Activated CD8-positive, alpha-beta T cell treated with anti-CD3 and anti-CD28 coated beads for 36 hours (primary cell): ENCODE measurements at regions of chrX and their contacts with region 1.

Region 1: GRCh38 chrX:131854581-131854980 is 168.5 kb upstream of the STK26 start:
- DNase-seq: no peak
- ATAC-seq: no peak
- H3K4me3 Mint-ChIP-seq: no peak overlapping the region
- H3K27ac Mint-ChIP-seq: no peak overlapping the region
- H3K4me1 Mint-ChIP-seq: no peaks in the 10 kb centered on the region
- H3K27me3 Mint-ChIP-seq: no peaks in the 10 kb centered on the region
- CTCF ChIP-seq: peak; percentile 22

Region 2: DNA sequence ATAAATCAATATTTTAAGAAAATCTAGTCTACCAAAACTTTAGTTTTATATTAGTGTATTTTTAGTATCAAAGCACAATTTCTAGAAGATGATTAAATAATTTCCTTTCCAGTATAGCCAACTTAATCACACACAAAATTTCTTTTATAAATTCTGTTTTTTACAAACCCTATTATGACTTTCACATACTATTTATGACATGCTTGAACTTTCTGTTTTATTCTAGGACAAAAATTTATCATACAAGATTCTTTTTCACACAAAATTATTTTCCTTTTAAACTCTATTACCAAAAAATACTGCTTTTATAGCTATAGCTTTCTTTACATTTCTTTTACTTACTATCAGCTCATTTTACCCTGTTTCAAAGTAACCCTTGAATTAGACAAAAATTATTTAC is 161.2 kb before region 1 on chrX:
- CTCF ChIA-PET with region 1: no interaction called
- POLR2A ChIA-PET with region 1: no interaction called
- intact Hi-C with region 1: no loop called
- DNase-seq: no peak
- ATAC-seq: no peak
- H3K4me3 Mint-ChIP-seq: no peak overlapping the region
- H3K27ac Mint-ChIP-seq: no peak overlapping the region
- H3K4me1 Mint-ChIP-seq: no peaks in the 10 kb centered on the region
- H3K27me3 Mint-ChIP-seq: no peaks in the 10 kb centered on the region
- CTCF ChIP-seq: no peak

Region 3: GRCh38 chrX:132071260-132071659 is 216.7 kb after region 1 on chrX:
- CTCF ChIA-PET with region 1: interaction called, 4 read pairs
- POLR2A ChIA-PET with region 1: no interaction called
- intact Hi-C with region 1: loop called (anchors 10 kb)
- DNase-seq: no peak
- ATAC-seq: no peak
- H3K4me3 Mint-ChIP-seq: no peak overlapping the region
- H3K27ac Mint-ChIP-seq: no peak overlapping the region
- H3K4me1 Mint-ChIP-seq: no peaks in the 10 kb centered on the region
- H3K27me3 Mint-ChIP-seq: no peaks in the 10 kb centered on the region
- CTCF ChIP-seq: peak; percentile 31